KBM-7 (cell line): ENCODE measurements at regions of chr7 and their contacts with region 1.

Region 1: DNA sequence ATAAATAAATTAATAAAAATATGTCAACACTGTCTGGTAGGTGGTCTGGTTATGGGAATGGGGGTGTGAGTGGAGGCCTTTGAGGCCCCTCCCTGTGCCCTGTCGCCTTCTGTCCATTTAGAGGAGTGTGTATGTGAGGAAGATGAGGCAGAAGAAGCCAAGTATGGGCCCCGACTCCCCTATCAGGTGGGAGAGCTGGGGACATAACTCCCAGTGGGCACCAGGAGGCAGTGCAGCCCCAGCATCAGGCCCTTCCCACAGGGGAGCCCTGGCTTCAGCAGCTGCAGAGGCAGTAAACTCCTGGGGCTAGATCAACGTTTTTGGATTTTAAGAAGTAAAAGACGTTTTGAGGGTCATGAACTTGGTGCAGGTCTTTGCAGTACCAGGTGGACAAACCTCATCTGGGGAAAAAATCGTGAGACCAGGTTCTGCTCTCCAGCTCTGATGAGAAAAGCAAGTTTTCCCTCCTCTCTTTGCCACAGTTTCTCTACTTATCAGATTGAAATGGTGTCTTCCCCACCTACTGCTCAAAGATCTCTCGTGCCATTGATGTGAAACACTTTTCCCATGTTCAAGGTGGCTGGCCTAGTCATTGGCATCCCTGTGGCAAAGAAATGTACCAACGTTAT is 167.8 kb upstream of the EEPD1 start:
- DNase-seq: peak; percentile 73

Region 2: DNA sequence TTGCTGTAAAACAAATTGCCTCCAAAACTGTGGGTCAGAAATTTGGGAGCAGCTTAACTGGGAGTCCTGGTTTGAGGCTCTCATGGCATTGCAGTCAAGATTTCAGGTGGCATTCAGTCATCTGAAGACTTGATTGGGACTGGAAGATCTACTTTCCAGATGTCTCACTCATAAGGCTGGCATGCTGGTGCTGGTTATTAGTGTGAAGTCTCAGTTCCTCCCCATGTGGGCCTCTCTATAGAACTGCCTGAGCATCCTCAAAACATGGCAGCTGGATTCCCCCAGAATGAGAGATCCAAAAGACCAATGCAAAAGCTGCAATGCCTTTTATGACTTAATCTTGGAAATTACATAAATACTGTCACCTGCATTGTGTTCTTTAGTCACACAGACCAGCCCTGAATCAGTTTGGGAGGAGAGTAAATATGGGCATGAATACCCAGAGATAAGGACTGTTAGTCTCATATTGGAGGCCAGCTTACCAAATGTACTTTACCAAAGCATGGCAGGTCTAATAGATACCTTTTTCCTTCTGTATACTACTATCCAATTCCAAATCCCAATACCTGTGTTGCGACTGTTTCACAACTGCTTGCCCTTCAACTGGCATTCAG is 283.8 kb before region 1 on chr7:
- in situ Hi-C with region 1: no loop called
- DNase-seq: no peak

Region 3: DNA sequence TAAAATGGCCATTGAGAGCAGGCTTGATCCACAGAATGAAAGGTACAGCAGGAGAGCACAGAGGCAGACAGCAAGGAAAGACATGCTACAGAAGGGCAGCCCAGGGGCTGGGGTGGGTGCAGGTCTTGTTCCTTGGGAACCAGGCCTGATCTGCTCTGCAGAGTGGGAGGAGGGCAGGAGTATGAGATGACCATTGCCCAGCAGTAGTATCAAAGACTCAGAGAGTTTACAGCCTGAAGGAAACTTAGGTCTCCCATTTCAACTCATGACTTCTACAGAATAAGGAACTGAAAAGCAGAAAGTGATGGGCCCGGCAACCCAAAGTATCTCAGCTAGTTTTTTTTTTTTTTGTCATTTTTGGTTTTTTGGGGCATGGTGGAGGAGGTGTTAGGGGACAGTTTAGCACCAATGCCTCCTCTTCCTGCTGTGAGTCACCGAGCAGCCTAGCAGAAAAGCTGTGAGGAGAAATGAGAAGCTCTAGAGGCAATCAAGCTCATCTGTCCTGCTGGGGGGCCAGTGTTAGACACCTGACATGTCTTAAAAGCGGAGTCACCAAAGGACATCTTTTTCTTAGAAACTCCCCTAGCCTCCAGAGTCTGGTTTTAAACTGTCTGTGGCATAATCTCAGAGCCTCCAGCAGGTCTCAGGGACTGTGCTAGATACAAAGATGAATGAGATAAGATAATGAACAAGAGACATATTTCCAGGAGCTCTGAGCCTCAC is 256.0 kb before region 1 on chr7:
- in situ Hi-C with region 1: no loop called
- DNase-seq: peak; percentile 88

Region 4: DNA sequence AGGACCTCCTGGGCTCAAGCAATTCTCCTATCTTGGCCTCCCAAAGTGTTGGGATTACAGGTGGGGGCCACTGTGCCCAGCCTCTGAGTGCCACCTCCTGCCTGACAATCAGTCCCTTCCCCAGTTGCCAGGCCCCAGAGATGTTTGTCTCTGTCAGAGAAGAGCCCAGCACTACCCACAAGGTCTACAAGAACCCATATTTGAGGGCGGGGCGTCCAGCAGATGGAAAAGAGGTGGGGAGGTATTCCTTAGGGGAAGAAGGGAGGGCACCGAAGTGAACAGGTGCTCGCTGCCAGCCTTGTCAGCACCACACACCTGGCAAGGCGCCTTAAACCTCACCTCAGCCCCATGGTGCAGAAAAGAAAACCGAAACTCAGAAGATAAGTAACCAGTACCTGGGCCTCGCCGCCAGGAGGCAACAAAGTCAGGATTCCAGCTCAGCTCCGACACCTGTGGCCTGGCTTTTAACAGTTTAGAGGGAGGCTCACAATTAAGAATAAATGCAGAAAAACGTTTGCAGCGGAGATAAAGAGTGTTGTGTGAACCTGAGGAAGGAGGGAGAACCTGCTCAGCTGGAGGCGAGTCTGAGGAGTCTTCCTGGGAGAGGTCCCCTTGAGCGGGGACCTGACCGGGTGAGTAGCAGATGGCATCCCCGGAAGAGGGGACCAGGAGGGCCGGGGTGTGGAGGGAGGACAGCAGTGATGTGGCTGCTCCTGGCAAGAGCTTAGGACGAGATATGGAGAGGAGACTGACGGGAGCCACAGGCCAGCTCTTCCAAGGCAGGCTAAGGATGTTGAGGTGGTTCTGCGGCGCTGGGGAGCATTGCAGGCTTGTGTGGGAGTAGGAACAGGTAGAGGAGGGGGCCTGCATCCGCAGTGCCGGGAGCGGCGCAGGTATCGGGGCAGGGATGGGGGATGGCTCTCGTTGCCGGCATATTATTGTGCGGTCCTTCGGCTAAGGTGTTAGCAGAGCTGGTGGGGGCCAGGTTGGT is 327.4 kb after region 1 on chr7:
- in situ Hi-C with region 1: loop called (anchors 10 kb)
- DNase-seq: no peak